ENCODE measurements at regions of chr2 and their contacts with region 1.

Region 1: GRCh38 chr2:205700331-205701132 is 18.2 kb downstream of the NRP2 start:
- DNase-seq: no peak
- ATAC-seq: peak; percentile 85
- H3K4me3 ChIP-seq: peak overlapping the region; percentile 21; the same call in 1 of the 2 replicates
- H3K27ac ChIP-seq: peak overlapping the region; percentile 66
- H3K4me1 ChIP-seq: peaks cover 28% of the 10 kb centered on the region
- H3K27me3 ChIP-seq: no peaks in the 10 kb centered on the region
- CTCF ChIP-seq: no peak
- EP300 ChIP-seq: no peak
- POLR2A ChIP-seq: no peak
- RAD21 ChIP-seq: no peak

Region 2: GRCh38 chr2:205714058-205714776 is 13.7 kb after region 1 on chr2:
- CTCF ChIA-PET with region 1: interaction called, 3 read pairs
- POLR2A ChIA-PET with region 1: interaction called, 7 read pairs
- RAD21 ChIA-PET with region 1: interaction called, 5 read pairs
- SMC1A ChIA-PET with region 1: interaction called, 50 read pairs
- in situ Hi-C with region 1: no loop called
- intact Hi-C with region 1: no loop called
- DNase-seq: peak; percentile 78
- ATAC-seq: peak; percentile 89
- H3K4me3 ChIP-seq: no peak overlapping the region
- H3K27ac ChIP-seq: peak overlapping the region; percentile 79
- H3K4me1 ChIP-seq: peaks cover 33% of the 10 kb centered on the region
- H3K27me3 ChIP-seq: no peaks in the 10 kb centered on the region
- CTCF ChIP-seq: no peak
- EP300 ChIP-seq: peak; percentile 68 to 81; a peak in 3 of 4 replicates
- POLR2A ChIP-seq: no peak
- RAD21 ChIP-seq: 0 out of 2 replicates have a peak, but pooled peaks have one; percentile 1

Region 3: DNA sequence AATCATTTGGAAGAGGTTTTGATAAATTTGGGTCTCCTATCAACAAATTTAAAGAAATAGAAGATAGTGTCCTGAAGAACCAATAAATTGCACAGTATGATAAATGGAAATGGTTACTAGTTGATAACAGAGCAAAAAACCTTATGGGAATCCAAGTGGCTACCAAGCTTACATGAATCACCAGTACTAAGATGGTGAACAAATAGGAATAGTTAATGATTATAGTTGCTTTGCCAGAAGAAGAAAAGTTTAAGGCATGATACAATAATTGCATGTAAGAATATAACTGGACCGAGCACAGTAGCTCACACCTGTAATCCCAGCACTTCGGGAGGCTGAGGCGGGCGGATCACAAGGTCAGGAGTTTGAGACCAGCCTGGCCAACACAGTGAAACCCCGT is 405.0 kb after region 1 on chr2:
- CTCF ChIA-PET with region 1: no interaction called
- POLR2A ChIA-PET with region 1: no interaction called
- RAD21 ChIA-PET with region 1: no interaction called
- SMC1A ChIA-PET with region 1: no interaction called
- in situ Hi-C with region 1: no loop called
- intact Hi-C with region 1: no loop called
- DNase-seq: no peak
- ATAC-seq: no peak
- H3K4me3 ChIP-seq: no peak overlapping the region
- H3K27ac ChIP-seq: no peak overlapping the region
- H3K4me1 ChIP-seq: no peaks in the 10 kb centered on the region
- H3K27me3 ChIP-seq: no peaks in the 10 kb centered on the region
- CTCF ChIP-seq: no peak
- EP300 ChIP-seq: no peak
- POLR2A ChIP-seq: no peak
- RAD21 ChIP-seq: no peak

Region 4: GRCh38 chr2:206328979-206329378 is 628.4 kb after region 1 on chr2:
- CTCF ChIA-PET with region 1: no interaction called
- POLR2A ChIA-PET with region 1: no interaction called
- RAD21 ChIA-PET with region 1: no interaction called
- SMC1A ChIA-PET with region 1: no interaction called
- in situ Hi-C with region 1: no loop called
- intact Hi-C with region 1: no loop called
- DNase-seq: no peak
- ATAC-seq: no peak
- H3K4me3 ChIP-seq: no peak overlapping the region
- H3K27ac ChIP-seq: no peak overlapping the region
- H3K4me1 ChIP-seq: no peaks in the 10 kb centered on the region
- H3K27me3 ChIP-seq: no peaks in the 10 kb centered on the region
- CTCF ChIP-seq: no peak
- EP300 ChIP-seq: no peak
- POLR2A ChIP-seq: no peak
- RAD21 ChIP-seq: no peak

Measured in GM12878 (cell line).